ENCODE measurements at regions of chr6 and their contacts with region 1.

Region 1: DNA sequence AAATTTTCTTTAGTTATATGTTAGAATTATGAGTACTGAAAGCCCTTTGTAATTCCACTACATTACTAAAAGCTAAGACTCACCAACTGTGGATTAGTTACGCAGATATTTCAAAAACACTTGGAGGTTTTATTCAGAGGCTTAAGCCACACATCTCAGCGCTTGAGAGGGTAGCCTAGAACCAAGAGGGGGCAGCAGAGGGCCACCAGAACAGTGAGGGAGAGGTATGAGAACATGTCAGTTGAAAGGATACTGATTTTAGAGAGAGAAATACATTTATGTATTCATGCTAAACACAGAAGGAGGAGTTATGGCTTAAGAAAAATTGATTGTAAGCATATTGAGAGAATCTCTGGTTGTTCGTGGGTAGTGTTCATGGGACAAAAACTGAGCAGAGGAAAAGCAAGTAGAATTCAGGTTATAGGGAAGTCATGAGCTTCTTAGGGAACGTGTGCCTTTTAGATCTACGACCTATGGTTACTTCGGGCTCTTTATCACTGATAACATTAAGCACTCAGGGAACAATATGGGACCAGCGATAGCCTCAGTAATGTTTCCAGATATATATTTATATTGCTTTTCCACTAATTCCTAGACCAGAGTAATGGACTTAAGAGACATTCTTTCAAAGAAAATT is 20.4 kb upstream of the SERINC1 start:
- DNase-seq: peak; percentile 30 to 96 (median 76)

Region 2: DNA sequence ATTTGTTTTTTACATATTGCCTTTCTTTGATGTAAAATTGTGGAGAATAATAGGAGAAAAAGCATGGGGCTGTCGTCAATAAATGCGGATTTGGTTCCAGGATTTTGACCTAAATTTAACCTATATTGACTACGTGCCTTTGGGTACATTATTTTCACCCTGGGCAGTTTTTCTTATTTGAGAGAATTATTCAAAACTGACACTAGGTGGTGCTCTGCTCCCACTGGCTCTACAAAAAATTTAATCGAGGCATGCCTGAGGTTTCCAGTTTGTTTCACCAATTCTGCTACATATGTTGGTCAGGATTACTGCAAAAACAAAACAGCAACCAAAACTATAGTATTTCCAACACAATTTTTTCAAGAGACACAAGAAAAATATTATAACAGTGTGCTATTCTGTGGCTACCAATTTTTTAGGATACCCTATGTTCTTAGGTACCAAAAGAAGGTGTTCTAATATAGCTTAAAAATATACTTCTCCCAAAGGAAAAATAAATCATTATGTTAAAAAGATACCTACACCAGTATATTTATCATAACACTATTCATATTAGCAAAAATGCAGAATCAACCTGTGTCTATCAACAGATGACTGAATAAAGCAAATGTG is 238.8 kb after region 1 on chr6:
- intact Hi-C with region 1: loop called (anchors 10 kb)
- DNase-seq: peak in 2 of 10 donors; percentile 23 to 34

Measured in posterior cingulate gyrus (tissue), 11 donors.